ENCODE measurements at regions of chr4 and their contacts with region 1.

Region 1: DNA sequence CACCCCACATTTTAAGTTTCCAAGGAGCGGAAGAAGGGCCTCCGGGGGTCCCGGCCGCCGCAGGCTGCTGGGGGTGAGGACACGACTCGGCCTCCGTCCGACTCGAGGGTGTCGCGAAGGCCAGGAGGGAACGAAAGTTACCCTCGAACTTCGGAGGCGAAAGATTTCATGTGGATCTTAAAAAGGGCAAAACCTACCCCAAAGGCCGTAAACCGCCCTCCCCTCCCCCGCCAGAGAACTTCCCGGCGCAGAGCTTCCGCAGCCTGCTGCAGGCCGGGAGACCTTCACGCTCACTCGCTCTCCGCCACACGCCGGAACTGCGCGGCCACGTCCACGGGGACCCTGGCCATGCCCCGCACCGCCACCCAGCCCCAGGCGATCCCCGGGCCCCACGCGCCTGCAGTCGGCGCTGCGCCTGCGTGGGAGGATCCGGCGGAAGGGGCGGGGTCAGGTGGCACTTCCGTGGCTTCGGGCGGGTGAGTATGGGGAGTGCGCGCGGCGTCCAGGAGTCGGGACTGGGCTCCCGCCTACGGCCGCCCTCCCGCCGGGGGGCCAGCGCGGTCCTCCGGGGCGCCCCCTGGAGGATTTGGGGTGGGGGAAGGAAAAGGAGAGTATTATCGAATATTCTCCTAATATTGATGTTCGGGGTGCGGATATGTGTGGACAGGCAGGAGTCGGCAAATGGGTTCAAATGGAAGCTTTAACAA is at the start of gene MMAA:
- DNase-seq: peak; percentile 32
- ATAC-seq: peak; percentile 99
- H3K4me3 ChIP-seq: peak within 1 kb of the TSS; percentile 86 to 90
- H3K27ac ChIP-seq: peak within 1 kb of the TSS; percentile 97
- H3K4me1 ChIP-seq: peaks cover 6% of the 10 kb centered on the region; the same call in 1 of the 2 replicates
- H3K27me3 ChIP-seq: no peaks in the 10 kb centered on the region
- CTCF ChIP-seq: peak; percentile 83
- total RNA-seq, gene MMAA: 2.2 TPM

Region 2: DNA sequence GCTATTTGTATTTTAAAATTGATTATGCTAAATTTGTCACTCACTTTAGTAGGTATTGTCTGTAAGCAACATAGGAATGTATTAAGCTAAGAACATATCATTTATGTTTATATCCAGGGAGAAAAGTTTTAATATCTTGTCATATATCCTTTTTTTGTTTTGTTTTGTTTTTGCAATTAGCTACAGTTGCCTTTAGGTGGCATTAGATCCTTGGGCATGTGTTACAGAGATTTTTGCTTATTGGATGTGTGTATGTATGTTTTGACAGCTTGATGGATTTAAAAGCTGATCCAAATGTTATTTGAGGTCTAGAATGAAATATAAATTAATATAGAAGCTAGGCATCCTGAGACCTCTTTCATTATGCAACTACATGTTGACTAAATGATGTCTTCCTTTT is 402.6 kb before region 1 on chr4:
- CTCF ChIA-PET with region 1: interaction called, 4 read pairs
- POLR2A ChIA-PET with region 1: no interaction called
- in situ Hi-C with region 1: no loop called
- intact Hi-C with region 1: loop called (anchors 5 kb)
- DNase-seq: peak; percentile 15
- ATAC-seq: no peak
- H3K4me3 ChIP-seq: no peak overlapping the region
- H3K27ac ChIP-seq: no peak overlapping the region
- H3K4me1 ChIP-seq: no peaks in the 10 kb centered on the region
- H3K27me3 ChIP-seq: no peaks in the 10 kb centered on the region
- CTCF ChIP-seq: peak; percentile 52; the same call in 1 of the 2 replicates

Region 3: GRCh38 chr4:145481164-145481941 is 137.7 kb before region 1 on chr4 and contains the start of gene SMAD1:
- CTCF ChIA-PET with region 1: interaction called, 12 read pairs
- POLR2A ChIA-PET with region 1: no interaction called
- in situ Hi-C with region 1: no loop called
- intact Hi-C with region 1: loop called (anchors 10 kb)
- DNase-seq: no peak
- ATAC-seq: peak; percentile 93
- H3K4me3 ChIP-seq: peak within 1 kb of the TSS; percentile 68 to 76
- H3K27ac ChIP-seq: peak within 1 kb of the TSS; percentile 86
- H3K4me1 ChIP-seq: peaks cover 2% of the 10 kb centered on the region; the same call in 1 of the 2 replicates
- H3K27me3 ChIP-seq: no peaks in the 10 kb centered on the region
- CTCF ChIP-seq: no peak
- total RNA-seq, gene SMAD1: 24.1 TPM

Region 4: DNA sequence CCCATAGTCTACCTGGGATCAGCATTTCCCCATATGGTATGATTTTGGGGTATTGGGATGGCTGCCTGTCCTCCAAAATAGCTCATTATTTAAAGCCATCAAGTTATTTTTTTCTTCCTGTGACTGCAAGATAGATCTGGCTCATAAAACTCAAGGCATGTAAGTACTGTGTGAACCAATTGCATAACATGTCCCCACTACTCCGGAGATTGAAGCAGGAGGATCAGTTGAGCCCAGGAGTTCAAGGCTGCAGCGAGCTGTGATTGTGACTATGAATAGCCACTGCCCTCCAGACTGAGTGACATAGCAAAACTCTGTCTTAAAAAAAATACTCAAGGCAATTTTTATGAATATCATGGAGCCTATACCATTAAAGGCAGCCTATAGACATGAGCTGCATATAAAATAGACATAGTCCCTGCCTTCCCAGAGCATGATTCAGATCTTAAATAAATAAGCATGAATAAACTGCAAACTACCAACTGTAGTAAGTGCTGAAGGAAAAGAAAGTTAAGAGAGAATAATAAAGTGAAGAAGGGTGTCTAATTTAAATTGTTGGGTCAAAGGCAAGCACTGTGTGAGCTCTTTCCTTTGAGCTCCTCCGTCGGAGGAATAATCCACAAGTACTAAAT is 16.8 kb before region 1 on chr4:
- CTCF ChIA-PET with region 1: no interaction called
- POLR2A ChIA-PET with region 1: no interaction called
- in situ Hi-C with region 1: no loop called
- intact Hi-C with region 1: no loop called
- DNase-seq: no peak
- ATAC-seq: no peak
- H3K4me3 ChIP-seq: no peak overlapping the region
- H3K27ac ChIP-seq: no peak overlapping the region
- H3K4me1 ChIP-seq: no peaks in the 10 kb centered on the region
- H3K27me3 ChIP-seq: no peaks in the 10 kb centered on the region
- CTCF ChIP-seq: no peak

Region 5: GRCh38 chr4:145843148-145843547 is 224.1 kb after region 1 on chr4:
- CTCF ChIA-PET with region 1: no interaction called
- POLR2A ChIA-PET with region 1: no interaction called
- in situ Hi-C with region 1: no loop called
- intact Hi-C with region 1: no loop called
- DNase-seq: no peak
- ATAC-seq: no peak
- H3K4me3 ChIP-seq: no peak overlapping the region
- H3K27ac ChIP-seq: no peak overlapping the region
- H3K4me1 ChIP-seq: no peaks in the 10 kb centered on the region
- H3K27me3 ChIP-seq: no peaks in the 10 kb centered on the region
- CTCF ChIP-seq: no peak

Measured in Panc1 (cell line).